Activated naive CD8-positive, alpha-beta T cell treated with anti-CD3 and anti-CD28 coated beads, Interleukin-2, amount 10 ng/mL, durations not matched to agents 7 days and 5 days (primary cell): ENCODE measurements at regions of chr12 and their contacts with region 1.

Region 1: GRCh38 chr12:14960548-14961465 is 594 bp downstream of the ARHGDIB start:
- DNase-seq: peak; percentile 63
- ATAC-seq: peak; percentile 37
- H3K4me3 Mint-ChIP-seq: peak overlapping the region; percentile 98
- H3K27ac Mint-ChIP-seq: peak overlapping the region; percentile 99
- H3K4me1 Mint-ChIP-seq: peaks cover 46% of the 10 kb centered on the region
- H3K27me3 Mint-ChIP-seq: no peaks in the 10 kb centered on the region

Region 2: DNA sequence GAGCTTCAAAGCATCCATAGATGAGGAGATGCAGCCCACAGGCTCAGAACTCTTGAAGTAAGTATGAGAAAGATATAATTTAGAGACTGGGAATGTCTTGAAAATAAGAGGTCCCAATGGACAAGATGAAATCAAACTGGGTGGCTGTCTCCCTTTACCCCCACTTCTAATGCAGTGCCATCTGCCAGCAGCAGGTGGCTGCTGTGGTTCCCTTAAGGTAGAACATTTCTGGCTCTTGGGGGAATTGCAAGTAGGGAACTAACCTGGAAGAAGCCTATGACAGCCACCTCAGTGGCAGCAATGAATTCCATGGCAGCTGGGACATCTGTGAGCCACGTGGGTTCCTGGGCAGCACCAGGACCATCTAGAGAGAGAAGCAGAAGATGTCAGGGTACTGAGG is 23.1 kb before region 1 on chr12:
- POLR2A ChIA-PET with region 1: no interaction called
- DNase-seq: no peak
- ATAC-seq: peak; percentile 31
- H3K4me3 Mint-ChIP-seq: no peak overlapping the region
- H3K27ac Mint-ChIP-seq: peak overlapping the region; percentile 17
- H3K4me1 Mint-ChIP-seq: peaks cover 17% of the 10 kb centered on the region
- H3K27me3 Mint-ChIP-seq: no peaks in the 10 kb centered on the region

Region 3: GRCh38 chr12:14948672-14949071 is 12.1 kb before region 1 on chr12:
- POLR2A ChIA-PET with region 1: interaction called, 31 read pairs
- DNase-seq: no peak
- ATAC-seq: peak; percentile 92
- H3K4me3 Mint-ChIP-seq: peak overlapping the region; percentile 87
- H3K27ac Mint-ChIP-seq: peak overlapping the region; percentile 95
- H3K4me1 Mint-ChIP-seq: peaks cover 72% of the 10 kb centered on the region
- H3K27me3 Mint-ChIP-seq: no peaks in the 10 kb centered on the region

Region 4: GRCh38 chr12:14981049-14981448 is 20.2 kb after region 1 on chr12:
- POLR2A ChIA-PET with region 1: interaction called, 14 read pairs
- DNase-seq: no peak
- ATAC-seq: no peak
- H3K4me3 Mint-ChIP-seq: peak overlapping the region; percentile 4
- H3K27ac Mint-ChIP-seq: peak overlapping the region; percentile 1
- H3K4me1 Mint-ChIP-seq: peaks cover 60% of the 10 kb centered on the region
- H3K27me3 Mint-ChIP-seq: no peaks in the 10 kb centered on the region